ENCODE measurements at regions of chr22 and their contacts with region 1.

Region 1: GRCh38 chr22:38506118-38506962 is at the start of gene DDX17:
- DNase-seq: peak; percentile 99
- H3K4me3 ChIP-seq: peak within 1 kb of the TSS; percentile 80 to 92 (median 86)
- H3K27ac ChIP-seq: peak within 1 kb of the TSS; percentile 99 to 100 (median 99)
- H3K4me1 ChIP-seq: peaks cover 37 to 46% (median 42%) of the 10 kb centered on the region in 4 donors
- H3K27me3 ChIP-seq: no peaks in the 10 kb centered on the region
- CTCF ChIP-seq: peak in 1 of 3 experiments; percentile 26
- EP300 ChIP-seq: peak; percentile 32
- POLR2A ChIP-seq: peak; percentile 53
- total RNA-seq, gene DDX17: 327 to 1,333 (median 592) TPM

Region 2: GRCh38 chr22:38398609-38399461 is 107.5 kb before region 1 on chr22:
- intact Hi-C with region 1: loop called (anchors 10 kb)
- DNase-seq: peak; percentile 98
- H3K4me3 ChIP-seq: peak overlapping the region; percentile 85 to 99 (median 92)
- H3K27ac ChIP-seq: peak overlapping the region; percentile 93 to 97 (median 94)
- H3K4me1 ChIP-seq: peaks cover 25 to 37% (median 35%) of the 10 kb centered on the region in 4 donors
- H3K27me3 ChIP-seq: peaks cover 0 to 12% (median 0%) of the 10 kb centered on the region in 4 donors
- CTCF ChIP-seq: no peak
- EP300 ChIP-seq: no peak
- POLR2A ChIP-seq: peak; percentile 62